ENCODE measurements at regions of chr1 and their contacts with region 1.

Region 1: GRCh38 chr1:20696397-20697329 is 21.1 kb downstream of the KIF17 start:
- DNase-seq: peak; percentile 33
- H3K4me3 ChIP-seq: peak overlapping the region; percentile 44 to 82 (median 60)
- H3K27ac ChIP-seq: peak overlapping the region; percentile 67 to 90 (median 82)
- H3K4me1 ChIP-seq: peaks cover 4 to 18% (median 12%) of the 10 kb centered on the region in 3 donors
- H3K27me3 ChIP-seq: no peaks in the 10 kb centered on the region
- CTCF ChIP-seq: peak; percentile 79 to 90 (median 86)
- POLR2A ChIP-seq: no peak

Region 2: DNA sequence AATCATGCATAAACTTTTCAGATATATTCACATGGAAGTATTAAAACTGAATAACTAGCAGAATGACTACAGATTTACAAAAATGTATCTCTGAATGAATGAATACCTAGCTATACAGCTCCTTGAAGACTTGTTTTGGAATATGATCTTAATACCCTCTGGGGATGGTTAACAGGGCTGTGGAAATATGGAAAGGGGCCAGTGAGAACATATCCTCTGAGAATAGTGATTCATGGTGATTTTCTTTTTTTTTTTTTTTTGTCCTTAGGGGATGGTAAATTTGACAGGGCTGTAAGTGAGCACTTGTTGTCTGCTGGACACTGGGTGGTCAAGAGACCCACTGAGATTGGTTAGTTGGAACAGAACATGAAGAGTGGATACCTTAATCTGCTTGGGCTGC is 171.2 kb after region 1 on chr1:
- intact Hi-C with region 1: no loop called
- DNase-seq: no peak
- H3K4me3 ChIP-seq: no peak overlapping the region
- H3K27ac ChIP-seq: no peak overlapping the region
- H3K4me1 ChIP-seq: no peaks in the 10 kb centered on the region
- H3K27me3 ChIP-seq: no peaks in the 10 kb centered on the region
- CTCF ChIP-seq: no peak
- POLR2A ChIP-seq: no peak

Region 3: GRCh38 chr1:21189906-21190500 is 493.3 kb after region 1 on chr1:
- intact Hi-C with region 1: loop called (anchors 5 kb)
- DNase-seq: no peak
- H3K4me3 ChIP-seq: no peak overlapping the region
- H3K27ac ChIP-seq: peak overlapping the region in 2 of 4 donors; percentile 12 to 43
- H3K4me1 ChIP-seq: peaks cover 0 to 45% (median 8%) of the 10 kb centered on the region in 3 donors
- H3K27me3 ChIP-seq: peaks cover 0 to 2% (median 0%) of the 10 kb centered on the region in 4 donors
- CTCF ChIP-seq: no peak
- POLR2A ChIP-seq: no peak

Measured in esophagus squamous epithelium (tissue), 5 donors.